PC-3 (cell line): ENCODE measurements at regions of chr14 and their contacts with region 1.

Region 1: DNA sequence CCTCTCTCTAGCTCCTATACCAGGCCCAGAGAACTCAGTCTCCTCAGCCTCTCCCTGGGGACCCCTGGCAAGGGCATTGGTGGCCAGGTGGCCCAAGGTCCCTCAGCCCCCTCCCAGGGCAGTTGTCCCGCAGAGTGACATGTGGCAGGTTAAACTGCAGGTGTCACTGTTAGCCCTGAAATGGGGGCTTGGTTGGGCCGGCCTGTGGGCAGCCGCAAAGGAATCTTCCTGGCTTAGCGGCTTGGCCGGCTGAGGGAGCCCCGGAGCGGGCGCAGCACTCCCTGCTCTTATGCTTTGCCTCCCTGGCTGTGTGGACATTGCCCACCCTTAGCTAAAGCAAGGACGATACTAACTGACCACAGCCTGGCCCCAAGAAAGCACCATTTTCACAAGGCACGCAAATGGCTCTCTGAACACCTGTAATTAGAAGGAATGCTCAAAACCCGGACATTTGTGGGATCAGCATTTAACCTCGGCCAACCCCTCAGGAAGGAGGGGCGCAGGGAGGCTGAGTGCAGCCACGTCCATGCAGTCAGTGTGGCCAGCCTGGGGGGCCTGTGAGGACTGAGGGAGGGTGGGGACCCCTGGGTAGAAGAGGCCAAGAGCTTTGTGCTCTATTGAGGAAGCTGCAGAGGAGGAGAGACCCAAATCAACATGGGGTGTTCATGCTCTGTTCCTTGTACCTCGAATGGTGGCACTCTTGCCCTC is 82.2 kb downstream of the PAPOLA start:
- DNase-seq: peak; percentile 73
- ATAC-seq: peak; percentile 91
- H3K4me3 ChIP-seq: no peak overlapping the region
- H3K27ac ChIP-seq: no peak overlapping the region
- H3K4me1 ChIP-seq: no peaks in the 10 kb centered on the region
- H3K27me3 ChIP-seq: peaks cover 5% of the 10 kb centered on the region; the same call in 1 of the 2 replicates
- CTCF ChIP-seq: peak; percentile 87

Region 2: GRCh38 chr14:96688629-96689028 is 104.3 kb after region 1 on chr14:
- CTCF ChIA-PET with region 1: no interaction called
- POLR2A ChIA-PET with region 1: no interaction called
- intact Hi-C with region 1: no loop called
- DNase-seq: no peak
- ATAC-seq: no peak
- H3K4me3 ChIP-seq: no peak overlapping the region
- H3K27ac ChIP-seq: no peak overlapping the region
- H3K4me1 ChIP-seq: no peaks in the 10 kb centered on the region
- H3K27me3 ChIP-seq: peaks cover 56% of the 10 kb centered on the region
- CTCF ChIP-seq: no peak

Region 3: DNA sequence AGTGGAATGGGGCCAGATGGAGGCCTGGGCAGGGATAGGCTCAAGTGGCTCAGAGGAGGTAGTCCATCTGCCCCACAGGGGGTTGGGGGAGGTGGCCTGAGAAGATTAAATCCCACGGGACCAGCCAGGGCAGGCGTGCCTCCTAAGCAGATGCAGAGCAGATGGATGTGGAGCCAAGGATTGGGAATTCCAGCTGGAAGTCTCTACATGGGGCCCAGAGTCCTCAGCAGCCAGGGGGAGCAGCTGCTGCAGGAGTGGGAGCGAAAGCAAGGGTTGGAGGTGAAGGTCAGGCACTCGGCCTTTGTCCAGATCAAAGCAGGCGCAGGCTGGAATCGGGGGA is 170.5 kb after region 1 on chr14:
- CTCF ChIA-PET with region 1: no interaction called
- POLR2A ChIA-PET with region 1: no interaction called
- intact Hi-C with region 1: no loop called
- DNase-seq: no peak
- ATAC-seq: no peak
- H3K4me3 ChIP-seq: no peak overlapping the region
- H3K27ac ChIP-seq: no peak overlapping the region
- H3K4me1 ChIP-seq: no peaks in the 10 kb centered on the region; the same call in 1 of the 2 replicates
- H3K27me3 ChIP-seq: peaks cover 9% of the 10 kb centered on the region; the same call in 1 of the 2 replicates
- CTCF ChIP-seq: no peak

Region 4: DNA sequence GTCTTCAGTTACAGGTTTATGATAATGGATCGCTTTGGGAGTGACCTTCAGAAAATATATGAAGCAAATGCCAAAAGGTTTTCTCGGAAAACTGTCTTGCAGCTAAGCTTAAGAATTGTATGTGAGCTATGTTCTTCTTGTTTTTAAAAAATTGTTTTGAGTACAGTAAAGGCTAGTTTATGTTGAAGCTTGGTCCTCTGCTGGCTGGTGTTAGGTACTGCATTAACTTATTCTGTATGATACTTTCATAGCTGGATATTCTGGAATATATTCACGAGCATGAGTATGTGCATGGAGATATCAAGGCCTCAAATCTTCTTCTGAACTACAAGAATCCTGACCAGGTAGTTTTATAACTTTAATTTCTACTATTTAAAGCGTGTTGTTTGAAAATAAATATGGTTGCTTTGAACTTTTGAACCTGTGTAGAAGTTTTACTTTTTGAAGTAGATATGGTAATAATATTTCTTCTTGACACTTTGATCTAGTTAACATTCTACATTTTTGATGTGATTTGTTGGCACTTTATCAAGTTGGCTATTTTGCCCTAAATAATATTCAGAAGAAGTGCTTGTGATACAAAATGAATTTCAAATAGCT is 268.6 kb after region 1 on chr14:
- CTCF ChIA-PET with region 1: no interaction called
- POLR2A ChIA-PET with region 1: no interaction called
- intact Hi-C with region 1: loop called (anchors 5 kb)
- DNase-seq: peak; percentile 52
- ATAC-seq: peak; percentile 70
- H3K4me3 ChIP-seq: no peak overlapping the region
- H3K27ac ChIP-seq: no peak overlapping the region
- H3K4me1 ChIP-seq: peaks cover 13% of the 10 kb centered on the region
- H3K27me3 ChIP-seq: no peaks in the 10 kb centered on the region
- CTCF ChIP-seq: peak; percentile 80

Region 5: GRCh38 chr14:96874127-96874526 is 289.8 kb after region 1 on chr14:
- CTCF ChIA-PET with region 1: no interaction called
- POLR2A ChIA-PET with region 1: no interaction called
- intact Hi-C with region 1: no loop called
- DNase-seq: no peak
- ATAC-seq: no peak
- H3K4me3 ChIP-seq: no peak overlapping the region
- H3K27ac ChIP-seq: no peak overlapping the region
- H3K4me1 ChIP-seq: no peaks in the 10 kb centered on the region
- H3K27me3 ChIP-seq: no peaks in the 10 kb centered on the region
- CTCF ChIP-seq: no peak

Region 6: GRCh38 chr14:97185186-97185585 is 600.8 kb after region 1 on chr14:
- CTCF ChIA-PET with region 1: no interaction called
- POLR2A ChIA-PET with region 1: no interaction called
- intact Hi-C with region 1: loop called (anchors 10 kb)
- DNase-seq: peak; percentile 37
- ATAC-seq: peak; percentile 37; the same call in 1 of the 2 replicates
- H3K4me3 ChIP-seq: no peak overlapping the region
- H3K27ac ChIP-seq: no peak overlapping the region
- H3K4me1 ChIP-seq: peaks cover 9% of the 10 kb centered on the region
- H3K27me3 ChIP-seq: no peaks in the 10 kb centered on the region; the same call in 1 of the 2 replicates
- CTCF ChIP-seq: peak; percentile 68